Activated T-helper 1 cell treated with anti-CD3 and anti-CD28 coated beads, Interleukin-12 subunit alpha, Interleukin-12 subunit beta, Interleukin-2, Interleukin-4 antibody, amounts not matched to agents 30 ng/mL and 10 ng/mL and 1 ng/mL, durations not matched to agents 14 hours and 24 hours and 36 hours (primary cell): ENCODE measurements at regions of chr1 and their contacts with region 1.

Region 1: GRCh38 chr1:117664314-117664713 is 58.5 kb downstream of the TENT5C start:
- DNase-seq: peak; percentile 73
- H3K4me3 Mint-ChIP-seq: peak overlapping the region; percentile 57
- H3K27ac Mint-ChIP-seq: peak overlapping the region; percentile 84
- H3K4me1 Mint-ChIP-seq: peaks cover 88% of the 10 kb centered on the region
- H3K27me3 Mint-ChIP-seq: peaks cover 6% of the 10 kb centered on the region

Region 2: GRCh38 chr1:116504308-116505156 is 1159.8 kb before region 1 on chr1:
- intact Hi-C with region 1: loop called (anchors 10 kb)
- DNase-seq: peak; percentile 86
- H3K4me3 Mint-ChIP-seq: peak overlapping the region; percentile 3
- H3K27ac Mint-ChIP-seq: peak overlapping the region; percentile 88
- H3K4me1 Mint-ChIP-seq: peaks cover 91% of the 10 kb centered on the region
- H3K27me3 Mint-ChIP-seq: no peaks in the 10 kb centered on the region

Region 3: GRCh38 chr1:116806245-116806644 is 858.1 kb before region 1 on chr1:
- intact Hi-C with region 1: loop called (anchors 10 kb)
- DNase-seq: peak; percentile 40
- H3K4me3 Mint-ChIP-seq: peak overlapping the region; percentile 71
- H3K27ac Mint-ChIP-seq: peak overlapping the region; percentile 94
- H3K4me1 Mint-ChIP-seq: peaks cover 93% of the 10 kb centered on the region
- H3K27me3 Mint-ChIP-seq: no peaks in the 10 kb centered on the region

Region 4: GRCh38 chr1:117367047-117368018 is 297.0 kb before region 1 on chr1 and contains the start of gene MAN1A2:
- intact Hi-C with region 1: loop called (anchors 1 kb)
- DNase-seq: peak; percentile 74
- H3K4me3 Mint-ChIP-seq: peak within 1 kb of the TSS; percentile 97
- H3K27ac Mint-ChIP-seq: peak within 1 kb of the TSS; percentile 88
- H3K4me1 Mint-ChIP-seq: peaks cover 60% of the 10 kb centered on the region
- H3K27me3 Mint-ChIP-seq: no peaks in the 10 kb centered on the region
- total RNA-seq, gene MAN1A2: 30.1 and 32.5 TPM in 2 replicates

Region 5: GRCh38 chr1:117642963-117643362 is 21.4 kb before region 1 on chr1:
- intact Hi-C with region 1: loop called (anchors 2 kb)
- DNase-seq: no peak
- H3K4me3 Mint-ChIP-seq: no peak overlapping the region
- H3K27ac Mint-ChIP-seq: no peak overlapping the region
- H3K4me1 Mint-ChIP-seq: no peaks in the 10 kb centered on the region
- H3K27me3 Mint-ChIP-seq: peaks cover 30% of the 10 kb centered on the region

Region 6: GRCh38 chr1:119140177-119141019 is 1476.1 kb after region 1 on chr1 and contains the start of gene WARS2:
- intact Hi-C with region 1: loop called (anchors 1 kb)
- DNase-seq: peak; percentile 92
- H3K4me3 Mint-ChIP-seq: no peak within 1 kb of the TSS
- H3K27ac Mint-ChIP-seq: no peak within 1 kb of the TSS
- H3K4me1 Mint-ChIP-seq: peaks cover 41% of the 10 kb centered on the region
- H3K27me3 Mint-ChIP-seq: no peaks in the 10 kb centered on the region
- total RNA-seq, gene WARS2: 20.6 TPM in 2 replicates